Endothelial cell of umbilical vein (primary cell): ENCODE measurements at regions of chr9 and their contacts with region 1.

Region 1: DNA sequence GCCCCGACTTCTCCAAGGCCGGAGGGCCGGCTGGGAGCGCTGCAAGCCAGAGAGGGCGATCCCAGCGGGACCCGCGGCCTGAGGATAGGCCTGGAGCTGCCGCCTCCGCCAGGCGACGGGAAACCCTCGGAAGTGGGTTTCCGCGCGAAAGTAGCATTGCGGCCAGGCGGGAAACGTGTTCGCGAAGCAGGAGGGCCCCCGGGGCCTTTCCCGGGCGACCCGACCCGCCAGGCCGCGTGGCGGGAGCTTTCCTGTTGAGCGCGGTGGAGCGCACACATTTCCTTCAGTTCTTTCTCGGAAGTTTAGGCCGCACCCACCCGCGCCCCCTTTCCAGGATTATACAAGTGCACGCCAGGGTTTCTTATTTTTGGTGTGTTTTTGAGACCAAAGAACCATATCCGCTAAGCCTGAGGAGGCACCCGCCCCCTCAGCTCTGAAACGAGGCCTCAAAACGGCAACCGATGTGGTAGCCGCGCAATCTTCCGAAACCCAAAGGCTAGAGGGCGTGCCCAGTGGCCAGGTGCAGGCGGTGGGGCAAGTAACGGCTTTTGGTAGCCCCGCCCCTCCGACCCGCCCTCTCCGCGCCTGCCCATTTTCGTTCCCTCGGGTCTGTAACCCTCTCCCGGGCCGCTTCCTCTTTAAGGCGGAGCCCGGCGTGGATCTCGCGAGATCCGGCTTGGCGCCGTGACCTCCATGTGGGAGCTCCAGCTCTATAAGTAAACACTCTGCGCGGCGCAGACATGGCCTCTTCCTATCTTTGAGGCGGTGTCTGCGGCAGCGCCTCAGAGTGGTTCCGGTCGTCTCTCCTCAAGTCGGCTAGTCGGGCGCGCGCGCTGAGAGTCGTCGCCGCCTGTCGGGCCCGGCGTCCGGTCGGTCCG is at the start of gene UHRF2:
- DNase-seq: peak; percentile 97
- H3K4me3 ChIP-seq: peak within 1 kb of the TSS; percentile 53 to 100 (median 98)
- H3K27ac ChIP-seq: peak within 1 kb of the TSS; percentile 91
- H3K4me1 ChIP-seq: peaks cover 24% of the 10 kb centered on the region
- H3K27me3 ChIP-seq: peaks cover 0 to 3% of the 10 kb centered on the region in 2 experiments
- CTCF ChIP-seq: peak in 1 of 2 donors; percentile 4
- POLR2A ChIP-seq: peak; percentile 89
- total RNA-seq, gene UHRF2: 101 and 106 TPM in 2 replicates

Region 2: DNA sequence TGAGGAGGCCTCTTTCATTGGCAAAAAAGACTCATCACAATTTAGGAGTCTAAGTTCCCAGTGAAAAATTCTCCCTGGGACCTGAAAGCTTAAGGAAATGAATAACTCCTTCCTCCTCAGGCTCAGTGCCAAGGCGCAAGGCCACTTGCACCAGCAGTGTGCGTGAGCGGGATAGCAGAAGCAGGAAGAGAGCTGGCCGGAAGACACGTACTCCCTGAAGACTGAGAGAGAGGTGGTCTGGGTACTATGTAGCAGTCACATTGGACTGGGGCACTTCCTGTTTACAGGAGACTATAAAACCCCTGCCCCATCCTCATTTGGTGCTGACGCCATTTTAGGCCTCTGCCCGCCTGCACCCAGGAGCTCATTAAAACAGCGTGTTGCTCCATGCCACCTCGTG is 263.4 kb before region 1 on chr9:
- CTCF ChIA-PET with region 1: no interaction called
- POLR2A ChIA-PET with region 1: no interaction called
- dilution Hi-C with region 1: no loop called
- intact Hi-C with region 1: loop called (anchors 2 kb)
- DNase-seq: peak; percentile 97
- H3K4me3 ChIP-seq: no peak overlapping the region
- H3K27ac ChIP-seq: peak overlapping the region; percentile 78
- H3K4me1 ChIP-seq: peaks cover 23% of the 10 kb centered on the region
- H3K27me3 ChIP-seq: no peaks in the 10 kb centered on the region
- CTCF ChIP-seq: no peak
- POLR2A ChIP-seq: peak; percentile 60

Region 3: GRCh38 chr9:6330958-6331634 is 81.6 kb before region 1 on chr9:
- CTCF ChIA-PET with region 1: no interaction called
- POLR2A ChIA-PET with region 1: no interaction called
- dilution Hi-C with region 1: no loop called
- intact Hi-C with region 1: loop called (anchors 2 kb)
- DNase-seq: peak; percentile 88
- H3K4me3 ChIP-seq: no peak overlapping the region
- H3K27ac ChIP-seq: peak overlapping the region; percentile 69
- H3K4me1 ChIP-seq: peaks cover 19% of the 10 kb centered on the region
- H3K27me3 ChIP-seq: no peaks in the 10 kb centered on the region
- CTCF ChIP-seq: no peak
- POLR2A ChIP-seq: no peak

Region 4: DNA sequence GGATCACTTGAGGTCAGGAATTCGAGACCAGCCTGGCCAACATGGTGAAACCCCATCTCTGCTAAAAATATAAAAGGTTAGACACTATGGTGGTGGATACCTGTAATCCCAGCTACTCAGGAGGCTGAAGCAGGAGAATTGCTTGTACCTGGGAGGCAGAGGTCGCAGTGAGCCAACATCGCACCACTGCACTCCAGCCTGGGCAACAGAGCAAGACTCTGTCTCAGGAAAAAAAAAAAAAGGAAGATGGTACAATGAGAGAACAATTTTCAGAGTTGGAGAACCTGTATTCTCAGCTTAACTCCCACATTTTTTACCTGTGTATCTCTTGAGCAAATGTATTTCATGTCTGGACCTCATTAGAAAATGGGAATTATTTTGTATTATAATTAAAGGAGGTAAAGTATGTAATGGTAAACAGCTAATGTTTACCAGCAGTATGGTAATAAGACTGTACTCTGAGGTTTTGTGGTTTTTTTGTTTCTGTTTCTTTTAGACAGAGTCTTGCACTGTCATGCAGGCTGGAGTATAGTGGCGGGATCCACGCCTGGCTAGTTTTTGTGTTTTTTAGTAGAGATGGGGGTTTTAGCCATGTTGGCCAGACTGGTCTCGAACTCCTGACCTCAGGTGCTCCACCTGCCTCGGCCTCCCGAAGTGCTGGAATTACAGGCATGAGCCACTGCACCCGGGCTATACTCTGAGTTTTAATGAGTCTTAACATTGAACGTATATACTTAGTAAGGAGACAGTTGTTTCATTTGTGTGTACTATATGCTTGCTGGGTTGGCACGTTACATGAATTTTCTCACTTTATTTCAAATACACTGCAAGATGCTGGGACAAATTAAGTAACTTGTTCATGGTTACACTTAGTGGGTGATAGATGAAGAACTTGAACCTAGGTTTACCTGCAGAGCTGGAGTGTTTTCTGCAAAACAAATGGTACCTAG is 16.5 kb after region 1 on chr9:
- CTCF ChIA-PET with region 1: interaction called, 20 read pairs
- POLR2A ChIA-PET with region 1: interaction called, 6 read pairs
- dilution Hi-C with region 1: no loop called
- intact Hi-C with region 1: no loop called
- DNase-seq: no peak
- H3K4me3 ChIP-seq: no peak overlapping the region
- H3K27ac ChIP-seq: no peak overlapping the region
- H3K4me1 ChIP-seq: peaks cover 37% of the 10 kb centered on the region
- H3K27me3 ChIP-seq: no peaks in the 10 kb centered on the region
- CTCF ChIP-seq: no peak
- POLR2A ChIP-seq: no peak

Region 5: DNA sequence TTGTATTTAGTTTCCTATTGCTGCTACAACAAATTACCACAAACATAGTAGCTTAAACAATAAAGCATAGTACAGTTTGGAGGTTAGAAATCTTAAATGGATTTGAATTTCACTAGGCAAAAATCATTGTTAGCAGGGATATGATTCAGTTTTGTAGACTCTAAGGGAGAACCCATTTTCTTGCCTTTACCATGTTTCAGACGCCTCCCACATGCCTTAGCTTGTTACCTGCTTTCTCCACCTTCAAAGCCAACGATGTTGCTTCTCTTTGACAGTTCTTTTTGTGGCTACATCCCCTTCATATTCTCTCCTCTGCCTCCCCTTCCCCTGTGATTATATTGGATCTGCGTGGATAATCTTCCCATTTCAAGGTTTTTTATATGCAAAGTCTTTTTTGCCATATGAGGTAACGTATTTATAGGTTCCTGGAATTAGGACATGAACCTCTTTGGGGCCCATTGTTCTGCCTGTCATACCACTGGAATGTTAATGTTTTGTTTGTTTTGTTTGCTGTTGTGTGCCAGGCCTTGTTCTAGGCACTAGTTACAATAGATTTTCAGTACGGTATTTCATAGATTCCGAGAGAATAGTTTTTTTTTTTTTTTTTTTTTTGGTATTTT is 54.4 kb after region 1 on chr9:
- CTCF ChIA-PET with region 1: no interaction called
- POLR2A ChIA-PET with region 1: no interaction called
- dilution Hi-C with region 1: no loop called
- intact Hi-C with region 1: loop called (anchors 5 kb)
- DNase-seq: peak; percentile 20
- H3K4me3 ChIP-seq: no peak overlapping the region
- H3K27ac ChIP-seq: peak overlapping the region; percentile 64
- H3K4me1 ChIP-seq: peaks cover 8% of the 10 kb centered on the region
- H3K27me3 ChIP-seq: no peaks in the 10 kb centered on the region
- CTCF ChIP-seq: no peak
- POLR2A ChIP-seq: no peak

Region 6: DNA sequence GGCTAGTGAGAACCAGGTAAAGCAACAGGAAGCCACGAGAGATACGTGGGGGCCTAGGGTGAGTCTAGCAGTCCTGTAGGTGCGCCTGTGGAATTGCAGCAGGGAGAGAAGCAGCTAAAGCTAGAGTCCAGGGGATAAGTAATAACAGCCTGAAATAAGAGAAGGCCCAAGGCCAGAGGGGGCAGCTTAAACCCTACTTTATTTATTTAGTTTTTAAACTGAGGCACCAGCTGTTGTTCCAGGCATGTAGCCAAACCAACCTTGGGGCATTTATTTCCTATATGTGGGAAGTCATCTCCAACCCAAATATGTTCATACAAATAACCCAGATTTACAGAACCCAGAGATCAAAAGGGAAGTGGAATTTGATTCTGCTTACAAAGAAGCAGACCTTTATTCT is 139.3 kb after region 1 on chr9:
- CTCF ChIA-PET with region 1: interaction called, 8 read pairs
- POLR2A ChIA-PET with region 1: no interaction called
- dilution Hi-C with region 1: no loop called
- intact Hi-C with region 1: loop called (anchors 1 kb)
- DNase-seq: peak; percentile 92
- H3K4me3 ChIP-seq: peak overlapping the region in 1 of 3 experiments; percentile 58
- H3K27ac ChIP-seq: peak overlapping the region; percentile 99
- H3K4me1 ChIP-seq: peaks cover 42% of the 10 kb centered on the region
- H3K27me3 ChIP-seq: no peaks in the 10 kb centered on the region
- CTCF ChIP-seq: peak in 1 of 2 donors; percentile 45
- POLR2A ChIP-seq: peak; percentile 19

Region 7: DNA sequence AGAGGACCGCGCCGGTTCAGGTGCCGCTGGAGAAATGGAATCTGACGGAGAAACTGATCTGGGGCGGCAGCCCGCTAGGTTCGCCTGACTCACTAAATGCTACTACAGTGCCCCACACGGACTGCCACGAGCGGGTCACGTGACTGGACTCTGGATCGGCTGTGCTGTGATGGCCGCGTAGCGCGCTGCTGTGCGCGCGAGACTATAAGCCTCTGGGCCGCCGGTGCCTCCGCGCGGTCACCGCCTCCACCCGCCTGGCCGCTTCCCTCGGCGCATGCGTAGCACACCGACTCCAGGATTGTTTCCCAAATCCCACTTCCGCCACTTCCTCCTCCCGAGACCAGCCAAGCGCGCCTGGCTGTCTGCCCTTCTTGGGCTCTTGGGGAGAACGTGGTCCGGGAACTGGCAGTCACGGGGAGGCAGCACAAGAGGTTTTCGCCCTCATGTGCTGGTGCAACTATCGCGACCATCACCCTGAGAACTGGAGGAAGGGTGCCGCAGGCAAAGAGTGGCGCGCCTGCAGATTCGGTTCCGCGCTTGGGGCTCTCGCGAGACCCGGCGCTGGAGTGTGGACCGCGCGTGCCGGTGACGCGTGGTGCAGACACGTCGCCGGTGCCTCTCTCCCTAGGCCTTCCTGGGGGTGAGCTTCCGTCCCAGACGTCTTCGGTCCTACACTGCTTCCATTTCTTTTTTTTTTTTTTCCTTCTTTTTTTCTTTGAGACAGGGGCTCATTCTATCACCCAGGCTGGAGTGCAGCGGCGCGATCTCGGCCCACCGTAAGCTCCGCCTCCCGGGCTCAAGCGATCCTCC is 268.6 kb after region 1 on chr9:
- CTCF ChIA-PET with region 1: no interaction called
- POLR2A ChIA-PET with region 1: no interaction called
- dilution Hi-C with region 1: no loop called
- intact Hi-C with region 1: loop called (anchors 2 kb)
- DNase-seq: peak; percentile 99
- H3K4me3 ChIP-seq: peak overlapping the region; percentile 68 to 85 (median 81)
- H3K27ac ChIP-seq: peak overlapping the region; percentile 84
- H3K4me1 ChIP-seq: peaks cover 5% of the 10 kb centered on the region
- H3K27me3 ChIP-seq: no peaks in the 10 kb centered on the region
- CTCF ChIP-seq: no peak
- POLR2A ChIP-seq: peak; percentile 93